PC-3 (cell line): ENCODE measurements at regions of chr18 and their contacts with region 1.

Region 1: GRCh38 chr18:5295981-5296705 is 617 bp upstream of the ZBTB14 start:
- DNase-seq: peak; percentile 94
- ATAC-seq: peak; percentile 58
- H3K4me3 ChIP-seq: peak overlapping the region; percentile 75
- H3K27ac ChIP-seq: peak overlapping the region; percentile 58
- H3K4me1 ChIP-seq: peaks cover 6% of the 10 kb centered on the region; the same call in 1 of the 2 replicates
- H3K27me3 ChIP-seq: peaks cover 14% of the 10 kb centered on the region; the same call in 1 of the 2 replicates
- CTCF ChIP-seq: no peak

Region 2: GRCh38 chr18:5237723-5238370 is 58.3 kb before region 1 on chr18:
- CTCF ChIA-PET with region 1: interaction called, 3 read pairs
- POLR2A ChIA-PET with region 1: interaction called, 22 read pairs
- intact Hi-C with region 1: loop called (anchors 1 kb)
- DNase-seq: peak; percentile 80
- ATAC-seq: peak; percentile 86
- H3K4me3 ChIP-seq: peak overlapping the region; percentile 84
- H3K27ac ChIP-seq: peak overlapping the region; percentile 92
- H3K4me1 ChIP-seq: peaks cover 30% of the 10 kb centered on the region
- H3K27me3 ChIP-seq: no peaks in the 10 kb centered on the region
- CTCF ChIP-seq: no peak

Region 3: GRCh38 chr18:5410582-5410981 is 114.4 kb after region 1 on chr18:
- CTCF ChIA-PET with region 1: no interaction called
- POLR2A ChIA-PET with region 1: no interaction called
- intact Hi-C with region 1: loop called (anchors 2 kb)
- DNase-seq: peak; percentile 4
- ATAC-seq: peak; percentile 56
- H3K4me3 ChIP-seq: no peak overlapping the region
- H3K27ac ChIP-seq: no peak overlapping the region
- H3K4me1 ChIP-seq: no peaks in the 10 kb centered on the region
- H3K27me3 ChIP-seq: peaks cover 2% of the 10 kb centered on the region; the same call in 1 of the 2 replicates
- CTCF ChIP-seq: no peak